Naive thymus-derived CD4-positive, alpha-beta T cell (primary cell): ENCODE measurements at regions of chr1 and their contacts with region 1.

Region 1: GRCh38 chr1:65958561-65959350 is 166.1 kb downstream of the PDE4B start:
- DNase-seq: peak in 7 of 9 donors; percentile 23 to 75 (median 64)
- ATAC-seq: peak; percentile 80
- H3K4me3 ChIP-seq: no peak overlapping the region
- H3K4me3 Mint-ChIP-seq: no peak overlapping the region
- H3K27ac ChIP-seq: no peak overlapping the region
- H3K27ac Mint-ChIP-seq: no peak overlapping the region
- H3K4me1 ChIP-seq: no peaks in the 10 kb centered on the region
- H3K4me1 Mint-ChIP-seq: peaks cover 0 to 12% (median 0%) of the 10 kb centered on the region in 7 donors
- H3K27me3 ChIP-seq: no peaks in the 10 kb centered on the region
- H3K27me3 Mint-ChIP-seq: peaks cover 0 to 7% (median 3%) of the 10 kb centered on the region in 5 donors

Region 2: GRCh38 chr1:65059930-65060538 is 898.7 kb before region 1 on chr1:
- CTCF ChIA-PET with region 1: no interaction called
- POLR2A ChIA-PET with region 1: no interaction called
- intact Hi-C with region 1: loop called in 1 of 2 experiments (anchors 2 kb)
- DNase-seq: peak in 3 of 9 donors; percentile 25 to 29 (median 25)
- ATAC-seq: peak; percentile 51
- H3K4me3 ChIP-seq: no peak overlapping the region
- H3K4me3 Mint-ChIP-seq: peak overlapping the region in 5 of 10 donors; percentile 8 to 54 (median 51)
- H3K27ac ChIP-seq: no peak overlapping the region
- H3K27ac Mint-ChIP-seq: peak overlapping the region in 6 of 9 donors; percentile 12 to 76 (median 34)
- H3K4me1 ChIP-seq: peaks cover 6 to 16% of the 10 kb centered on the region in 2 donors
- H3K4me1 Mint-ChIP-seq: peaks cover 21 to 87% (median 80%) of the 10 kb centered on the region in 7 donors
- H3K27me3 ChIP-seq: no peaks in the 10 kb centered on the region
- H3K27me3 Mint-ChIP-seq: no peaks in the 10 kb centered on the region

Region 3: GRCh38 chr1:65235867-65236805 is 722.6 kb before region 1 on chr1:
- CTCF ChIA-PET with region 1: interaction called, 3 read pairs
- POLR2A ChIA-PET with region 1: no interaction called
- intact Hi-C with region 1: loop called in 1 of 2 experiments (anchors 10 kb)
- DNase-seq: peak in 4 of 9 donors; percentile 12 to 28 (median 22)
- ATAC-seq: peak; percentile 54
- H3K4me3 ChIP-seq: no peak overlapping the region
- H3K4me3 Mint-ChIP-seq: no peak overlapping the region
- H3K27ac ChIP-seq: no peak overlapping the region
- H3K27ac Mint-ChIP-seq: no peak overlapping the region
- H3K4me1 ChIP-seq: no peaks in the 10 kb centered on the region
- H3K4me1 Mint-ChIP-seq: peaks cover 2 to 18% (median 2%) of the 10 kb centered on the region in 7 donors
- H3K27me3 ChIP-seq: no peaks in the 10 kb centered on the region
- H3K27me3 Mint-ChIP-seq: peaks cover 6 to 23% (median 14%) of the 10 kb centered on the region in 5 donors

Region 4: DNA sequence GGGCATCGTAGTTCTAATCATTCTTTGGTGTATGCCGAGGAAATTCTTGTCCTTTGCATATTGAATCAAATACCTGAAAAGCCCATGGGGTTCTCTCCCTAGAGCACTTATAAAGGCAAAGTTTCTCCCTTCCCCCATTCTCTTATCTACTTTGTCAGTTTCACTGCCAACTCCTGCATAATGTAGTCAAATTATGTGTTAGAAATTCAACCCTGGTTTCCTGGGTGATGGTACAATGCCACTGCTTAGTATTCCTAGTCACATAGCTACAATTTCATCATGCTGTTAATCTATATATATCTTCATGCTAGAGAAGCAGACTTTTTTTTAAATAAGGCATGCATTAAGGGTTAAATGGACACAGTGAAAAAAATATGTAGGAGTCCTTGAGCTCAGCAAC is 47.1 kb before region 1 on chr1:
- CTCF ChIA-PET with region 1: no interaction called
- POLR2A ChIA-PET with region 1: no interaction called
- intact Hi-C with region 1: no loop called
- DNase-seq: no peak
- ATAC-seq: no peak
- H3K4me3 ChIP-seq: no peak overlapping the region
- H3K4me3 Mint-ChIP-seq: no peak overlapping the region
- H3K27ac ChIP-seq: no peak overlapping the region
- H3K27ac Mint-ChIP-seq: no peak overlapping the region
- H3K4me1 ChIP-seq: no peaks in the 10 kb centered on the region
- H3K4me1 Mint-ChIP-seq: no peaks in the 10 kb centered on the region
- H3K27me3 ChIP-seq: no peaks in the 10 kb centered on the region
- H3K27me3 Mint-ChIP-seq: peaks cover 4 to 26% (median 22%) of the 10 kb centered on the region in 5 donors

Region 5: GRCh38 chr1:66503841-66504470 is 545.2 kb after region 1 on chr1:
- CTCF ChIA-PET with region 1: interaction called, 4 read pairs
- POLR2A ChIA-PET with region 1: no interaction called
- intact Hi-C with region 1: loop called (anchors 1 to 5 kb)
- DNase-seq: peak in 6 of 9 donors; percentile 2 to 24 (median 10)
- ATAC-seq: peak; percentile 60
- H3K4me3 ChIP-seq: no peak overlapping the region
- H3K4me3 Mint-ChIP-seq: no peak overlapping the region
- H3K27ac ChIP-seq: no peak overlapping the region
- H3K27ac Mint-ChIP-seq: no peak overlapping the region
- H3K4me1 ChIP-seq: no peaks in the 10 kb centered on the region
- H3K4me1 Mint-ChIP-seq: no peaks in the 10 kb centered on the region
- H3K27me3 ChIP-seq: no peaks in the 10 kb centered on the region
- H3K27me3 Mint-ChIP-seq: peaks cover 31 to 53% (median 43%) of the 10 kb centered on the region in 5 donors

Region 6: GRCh38 chr1:66725885-66726665 is 767.3 kb after region 1 on chr1:
- CTCF ChIA-PET with region 1: no interaction called
- POLR2A ChIA-PET with region 1: no interaction called
- intact Hi-C with region 1: loop called (anchors 1 to 10 kb)
- DNase-seq: peak; percentile 10 to 75 (median 61)
- ATAC-seq: peak; percentile 87
- H3K4me3 ChIP-seq: no peak overlapping the region
- H3K4me3 Mint-ChIP-seq: no peak overlapping the region
- H3K27ac ChIP-seq: no peak overlapping the region
- H3K27ac Mint-ChIP-seq: peak overlapping the region in 1 of 9 donors; percentile 14
- H3K4me1 ChIP-seq: peaks cover 0 to 3% of the 10 kb centered on the region in 2 donors
- H3K4me1 Mint-ChIP-seq: peaks cover 8 to 23% (median 16%) of the 10 kb centered on the region in 7 donors
- H3K27me3 ChIP-seq: peaks cover 0 to 2% of the 10 kb centered on the region in 2 donors
- H3K27me3 Mint-ChIP-seq: peaks cover 9 to 28% (median 13%) of the 10 kb centered on the region in 5 donors